ENCODE measurements at regions of chr1 and their contacts with region 1.

Region 1: GRCh38 chr1:151968058-151968457 is 25.6 kb downstream of the S100A10 start:
- DNase-seq: no peak
- H3K4me3 ChIP-seq: no peak overlapping the region
- CTCF ChIP-seq: no peak
- POLR2A ChIP-seq: no peak

Region 2: DNA sequence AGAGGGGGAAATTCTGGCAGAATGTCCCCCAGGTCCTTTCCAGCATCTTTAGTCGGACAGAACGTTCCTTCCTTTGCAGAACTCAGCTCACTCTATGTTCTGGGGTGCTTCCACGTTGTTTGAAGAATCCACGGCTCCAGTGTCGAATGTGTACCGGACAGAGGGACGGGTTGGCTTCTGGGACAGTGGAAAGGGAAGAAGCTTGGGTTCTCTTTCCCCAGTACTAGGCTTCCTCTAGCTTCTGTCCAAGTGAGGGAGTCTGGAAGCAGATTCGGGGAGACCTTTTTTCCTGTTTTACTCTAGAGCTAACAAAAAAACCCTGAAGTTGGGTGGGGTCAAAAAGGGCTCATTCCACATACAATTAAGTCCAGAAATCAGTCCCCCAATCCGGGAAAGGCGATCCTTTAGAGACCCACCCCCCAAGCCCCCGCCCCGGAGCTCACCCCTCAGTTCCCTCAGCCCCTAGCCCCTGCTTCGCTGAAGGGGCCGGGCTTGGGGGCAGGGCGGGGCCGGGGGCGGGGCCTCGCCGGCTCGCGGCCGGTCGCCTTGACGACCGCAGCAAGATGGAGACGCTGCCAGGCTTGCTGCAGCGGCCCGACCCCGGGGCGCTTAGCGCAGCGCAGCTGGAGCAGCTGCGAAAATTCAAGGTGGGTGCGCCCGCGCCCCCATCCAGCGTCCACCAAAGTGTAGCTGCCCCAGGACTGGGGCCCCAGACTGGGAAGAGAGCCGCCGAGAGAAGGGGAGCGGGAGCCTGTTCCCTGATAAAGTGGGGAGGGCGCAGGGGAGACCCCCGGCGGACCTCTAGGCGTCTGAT is 246.9 kb before region 1 on chr1 and contains the start of gene RIIAD1:
- intact Hi-C with region 1: no loop called
- DNase-seq: no peak
- H3K4me3 ChIP-seq: no peak within 1 kb of the TSS
- CTCF ChIP-seq: no peak
- POLR2A ChIP-seq: no peak
- total RNA-seq, gene RIIAD1: not detected

Region 3: DNA sequence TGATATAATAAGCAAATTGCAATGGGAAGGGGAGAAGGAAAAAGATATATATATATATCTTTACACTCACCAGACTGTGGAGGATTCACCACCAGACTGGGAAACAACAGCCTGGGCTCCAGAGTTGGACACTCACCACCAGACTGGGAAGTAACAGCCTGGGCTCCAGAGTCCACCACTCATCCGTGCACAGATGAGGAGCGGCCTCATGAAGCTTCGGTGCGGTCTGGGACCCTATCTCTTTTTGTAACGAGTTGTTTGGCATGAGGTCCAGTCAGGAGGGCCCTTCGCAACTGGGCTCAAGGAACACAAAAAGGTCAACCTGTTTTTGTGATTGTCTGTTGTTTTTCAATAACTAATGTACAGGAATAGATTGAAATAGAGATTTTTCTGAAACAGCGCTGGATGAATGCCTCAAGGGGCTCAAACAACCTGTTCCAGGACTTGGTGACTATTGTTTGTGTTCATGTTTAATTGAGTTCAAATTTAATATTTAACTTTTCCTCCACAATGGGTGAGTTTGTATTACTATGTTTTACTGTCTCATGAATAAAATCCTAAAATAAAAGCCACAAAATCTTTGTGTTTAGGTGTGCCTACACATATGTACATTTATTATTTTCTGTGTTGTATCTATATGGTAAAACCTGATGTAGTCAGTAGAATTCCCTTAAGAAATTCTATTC is 14.5 kb before region 1 on chr1:
- intact Hi-C with region 1: loop called (anchors 1 kb)
- DNase-seq: no peak
- H3K4me3 ChIP-seq: no peak overlapping the region
- CTCF ChIP-seq: no peak
- POLR2A ChIP-seq: no peak

Region 4: DNA sequence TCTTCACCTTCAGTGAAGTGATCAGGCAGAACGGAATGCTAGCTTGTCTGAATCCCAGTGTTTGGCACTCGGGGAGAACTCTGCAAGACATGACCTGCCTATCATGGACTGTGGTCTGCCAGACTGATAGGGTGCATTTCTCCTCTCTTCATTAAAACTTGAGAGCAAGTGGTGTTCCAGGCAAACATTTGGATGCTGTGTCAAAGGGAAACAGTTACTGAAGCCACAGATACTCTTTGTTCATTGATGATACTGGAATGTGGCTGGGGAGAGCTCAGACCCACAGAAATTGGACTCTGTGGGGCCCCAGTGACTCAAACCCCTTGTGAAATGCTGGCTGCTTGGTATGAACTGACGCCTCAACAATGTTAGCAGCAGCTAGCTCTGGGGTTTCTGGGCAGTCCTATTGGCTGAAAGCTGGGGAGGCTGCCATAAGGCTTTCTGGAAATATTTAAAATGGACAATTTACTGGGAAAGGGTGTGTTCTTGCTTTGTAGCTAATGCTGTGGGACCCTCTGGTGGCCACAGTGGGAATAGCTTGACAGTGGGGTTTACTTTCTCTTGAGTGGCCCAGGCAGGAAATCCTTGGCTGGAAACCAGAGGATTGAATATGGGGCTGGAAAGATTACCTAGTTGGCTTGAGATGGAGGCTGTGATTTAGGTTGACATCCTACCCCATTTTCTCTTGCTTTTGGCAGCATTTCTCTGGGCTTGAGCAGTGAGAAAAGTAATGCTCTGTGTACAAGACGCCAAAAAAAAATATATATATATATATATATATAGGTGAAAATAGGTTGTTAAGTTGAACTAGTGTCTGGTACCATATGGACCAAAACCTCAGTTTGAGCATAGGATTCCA is 33.6 kb after region 1 on chr1:
- intact Hi-C with region 1: loop called (anchors 5 kb)
- DNase-seq: peak; percentile 94 to 97
- H3K4me3 ChIP-seq: no peak overlapping the region
- CTCF ChIP-seq: peak in 1 of 3 donors; percentile 71
- POLR2A ChIP-seq: no peak

Region 5: GRCh38 chr1:152015766-152016165 is 47.7 kb after region 1 on chr1:
- intact Hi-C with region 1: loop called (anchors 1 kb)
- DNase-seq: peak in 1 of 2 donors; percentile 28
- H3K4me3 ChIP-seq: no peak overlapping the region
- CTCF ChIP-seq: no peak
- POLR2A ChIP-seq: no peak